Panc1 (cell line): ENCODE measurements at regions of chr5 and their contacts with region 1.

Region 1: GRCh38 chr5:59873113-59873512 is 20.4 kb downstream of the PDE4D start:
- DNase-seq: no peak
- ATAC-seq: no peak
- H3K4me3 ChIP-seq: no peak overlapping the region
- H3K27ac ChIP-seq: no peak overlapping the region
- H3K4me1 ChIP-seq: no peaks in the 10 kb centered on the region
- H3K27me3 ChIP-seq: no peaks in the 10 kb centered on the region
- CTCF ChIP-seq: no peak

Region 2: GRCh38 chr5:59449905-59450644 is 423.0 kb before region 1 on chr5:
- CTCF ChIA-PET with region 1: no interaction called
- POLR2A ChIA-PET with region 1: no interaction called
- in situ Hi-C with region 1: no loop called
- intact Hi-C with region 1: no loop called
- DNase-seq: no peak
- ATAC-seq: no peak
- H3K4me3 ChIP-seq: no peak overlapping the region
- H3K27ac ChIP-seq: no peak overlapping the region
- H3K4me1 ChIP-seq: no peaks in the 10 kb centered on the region
- H3K27me3 ChIP-seq: no peaks in the 10 kb centered on the region
- CTCF ChIP-seq: peak; percentile 22; the same call in 1 of the 2 replicates

Region 3: GRCh38 chr5:60299944-60300343 is 426.8 kb after region 1 on chr5:
- CTCF ChIA-PET with region 1: no interaction called
- POLR2A ChIA-PET with region 1: interaction called, 10 read pairs
- in situ Hi-C with region 1: no loop called
- intact Hi-C with region 1: no loop called
- DNase-seq: no peak
- ATAC-seq: no peak
- H3K4me3 ChIP-seq: no peak overlapping the region
- H3K27ac ChIP-seq: no peak overlapping the region
- H3K4me1 ChIP-seq: no peaks in the 10 kb centered on the region
- H3K27me3 ChIP-seq: no peaks in the 10 kb centered on the region
- CTCF ChIP-seq: no peak